HCT116 (cell line): ENCODE measurements at regions of chr1 and their contacts with region 1.

Region 1: GRCh38 chr1:24391882-24392603 is 21.5 kb downstream of the STPG1 start:
- DNase-seq: no peak
- ATAC-seq: peak; percentile 82
- H3K4me3 ChIP-seq: no peak overlapping the region
- H3K27ac ChIP-seq: no peak overlapping the region
- H3K4me1 ChIP-seq: peaks cover 8 to 35% of the 10 kb centered on the region in 2 experiments
- H3K27me3 ChIP-seq: no peaks in the 10 kb centered on the region
- CTCF ChIP-seq: peak; percentile 81 to 91 (median 90)
- POLR2A ChIP-seq: no peak
- RAD21 ChIP-seq: peak; percentile 91

Region 2: GRCh38 chr1:24070821-24071393 is 321.1 kb before region 1 on chr1:
- CTCF ChIA-PET with region 1: interaction called, 12 read pairs
- POLR2A ChIA-PET with region 1: no interaction called
- RAD21 ChIA-PET with region 1: no interaction called
- intact Hi-C with region 1: loop called (anchors 2 kb)
- DNase-seq: peak; percentile 77
- ATAC-seq: peak; percentile 95
- H3K4me3 ChIP-seq: no peak overlapping the region
- H3K27ac ChIP-seq: no peak overlapping the region
- H3K4me1 ChIP-seq: peaks cover 0 to 18% of the 10 kb centered on the region in 2 experiments; a peak in 2 of 4 replicates
- H3K27me3 ChIP-seq: no peaks in the 10 kb centered on the region
- CTCF ChIP-seq: peak; percentile 84 to 94 (median 88)
- POLR2A ChIP-seq: no peak
- RAD21 ChIP-seq: peak; percentile 96

Region 3: GRCh38 chr1:24201941-24202440 is 190.1 kb before region 1 on chr1:
- CTCF ChIA-PET with region 1: interaction called, 457 read pairs
- POLR2A ChIA-PET with region 1: interaction called, 19 read pairs
- RAD21 ChIA-PET with region 1: interaction called, 36 to 68 read pairs
- intact Hi-C with region 1: loop called (anchors 1 kb)
- DNase-seq: peak; percentile 86
- ATAC-seq: peak; percentile 73
- H3K4me3 ChIP-seq: no peak overlapping the region
- H3K27ac ChIP-seq: peak overlapping the region; percentile 31; the same call in 1 of the 2 replicates
- H3K4me1 ChIP-seq: peaks cover 15 to 36% of the 10 kb centered on the region in 2 experiments
- H3K27me3 ChIP-seq: no peaks in the 10 kb centered on the region
- CTCF ChIP-seq: peak; percentile 69 to 97 (median 88)
- POLR2A ChIP-seq: no peak
- RAD21 ChIP-seq: peak; percentile 99

Region 4: DNA sequence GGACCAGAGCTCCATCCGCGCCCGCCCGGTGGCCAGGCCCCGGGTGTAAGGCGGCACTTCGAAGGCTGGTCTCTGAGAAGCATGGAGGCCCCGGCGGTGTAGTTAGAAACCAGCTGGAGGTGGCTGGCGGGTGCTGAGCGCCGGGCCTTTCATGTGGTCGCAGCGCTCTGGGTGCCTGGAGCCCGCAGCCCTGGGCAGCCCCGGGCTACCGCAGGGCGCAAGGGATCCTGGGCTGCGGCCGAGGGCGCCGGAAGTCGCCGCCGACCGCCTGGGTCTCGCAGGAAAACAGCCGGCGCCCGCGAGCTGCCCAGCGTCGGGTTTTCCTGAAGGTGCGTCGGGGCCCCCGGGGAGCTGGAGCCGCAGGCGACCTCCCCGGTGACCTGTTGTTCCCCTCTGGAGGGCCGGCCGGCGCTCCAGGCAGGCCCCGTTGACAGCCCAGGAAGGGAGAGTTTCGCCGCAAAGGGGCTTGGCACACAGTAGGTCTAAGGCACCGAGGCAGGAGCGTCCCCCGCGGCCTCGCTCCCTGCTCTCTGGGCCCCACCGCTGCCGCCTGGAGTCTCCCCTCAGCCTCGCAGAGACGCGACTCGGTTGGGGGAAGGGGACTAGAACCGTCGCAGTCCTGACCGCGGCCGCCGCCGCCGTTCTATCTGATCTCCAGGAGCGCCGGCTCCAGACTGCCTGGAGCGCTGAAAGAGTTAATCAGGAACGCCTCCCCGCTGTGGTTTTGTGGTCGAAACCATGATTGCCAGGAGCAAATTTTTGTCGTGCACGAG is 70.2 kb before region 1 on chr1:
- CTCF ChIA-PET with region 1: interaction called, 4 read pairs
- POLR2A ChIA-PET with region 1: no interaction called
- RAD21 ChIA-PET with region 1: interaction called in 1 of 2 experiments, 3 read pairs
- intact Hi-C with region 1: loop called (anchors 5 kb)
- DNase-seq: peak; percentile 82
- ATAC-seq: peak; percentile 80
- H3K4me3 ChIP-seq: peak overlapping the region; percentile 49 to 63
- H3K27ac ChIP-seq: peak overlapping the region; percentile 61
- H3K4me1 ChIP-seq: peaks cover 44 to 92% of the 10 kb centered on the region in 2 experiments
- H3K27me3 ChIP-seq: peaks cover 73% of the 10 kb centered on the region
- CTCF ChIP-seq: no peak
- POLR2A ChIP-seq: no peak
- RAD21 ChIP-seq: peak; percentile 29

Region 5: GRCh38 chr1:24409535-24409934 is 17.5 kb after region 1 on chr1:
- CTCF ChIA-PET with region 1: interaction called, 20 read pairs
- POLR2A ChIA-PET with region 1: no interaction called
- RAD21 ChIA-PET with region 1: no interaction called
- intact Hi-C with region 1: no loop called
- DNase-seq: no peak
- ATAC-seq: no peak
- H3K4me3 ChIP-seq: no peak overlapping the region
- H3K27ac ChIP-seq: no peak overlapping the region
- H3K4me1 ChIP-seq: peaks cover 13 to 48% of the 10 kb centered on the region in 2 experiments
- H3K27me3 ChIP-seq: no peaks in the 10 kb centered on the region
- CTCF ChIP-seq: no peak
- POLR2A ChIP-seq: no peak
- RAD21 ChIP-seq: no peak

Region 6: DNA sequence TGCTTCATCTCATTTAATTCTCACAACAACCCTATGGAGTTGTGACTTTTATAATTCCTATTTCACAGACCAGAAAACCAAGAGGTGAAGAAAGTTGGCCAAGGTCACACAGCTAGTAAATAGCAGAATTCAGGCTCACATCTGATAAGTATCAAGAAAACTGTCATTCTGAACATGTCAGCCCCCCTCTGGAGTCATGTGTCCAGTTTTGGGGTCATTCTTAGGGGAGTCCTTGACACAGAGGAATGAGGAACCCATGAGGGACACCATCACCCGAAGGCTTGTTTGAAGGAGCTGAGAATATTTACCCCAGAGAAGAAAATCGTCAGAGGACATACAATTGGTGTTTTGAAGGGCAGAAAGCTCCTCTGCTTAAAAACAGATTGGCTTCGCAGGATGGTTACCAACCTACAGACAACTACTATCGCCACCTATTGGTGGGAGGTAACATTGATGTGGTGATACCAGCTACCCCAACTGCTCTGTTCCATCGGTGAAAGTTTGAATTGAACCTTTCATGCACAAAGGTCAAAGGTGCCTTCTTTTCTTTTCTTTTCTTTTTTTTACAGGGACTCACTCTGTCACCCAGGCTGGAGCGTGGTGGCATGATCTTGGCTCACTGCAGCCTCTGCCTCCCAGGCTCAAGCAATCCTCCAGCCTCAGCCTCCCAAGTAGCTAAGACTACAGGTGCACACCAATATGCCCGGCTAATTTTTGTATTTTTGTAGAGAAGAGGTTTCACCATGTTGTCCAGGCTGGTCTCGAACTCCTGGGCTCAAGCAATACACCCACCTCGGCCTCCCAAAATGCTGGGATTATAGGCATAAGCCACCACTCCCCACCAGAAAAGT is 195.2 kb after region 1 on chr1:
- CTCF ChIA-PET with region 1: interaction called, 17 read pairs
- POLR2A ChIA-PET with region 1: no interaction called
- RAD21 ChIA-PET with region 1: no interaction called
- intact Hi-C with region 1: loop called (anchors 10 kb)
- DNase-seq: peak; percentile 37
- ATAC-seq: peak; percentile 96
- H3K4me3 ChIP-seq: no peak overlapping the region
- H3K27ac ChIP-seq: no peak overlapping the region
- H3K4me1 ChIP-seq: peaks cover 3 to 4% of the 10 kb centered on the region in 2 experiments; a peak in 2 of 4 replicates
- H3K27me3 ChIP-seq: peaks cover 8% of the 10 kb centered on the region; the same call in 1 of the 2 replicates
- CTCF ChIP-seq: peak; percentile 59 to 82 (median 80); a peak in 5 of 6 replicates
- POLR2A ChIP-seq: no peak
- RAD21 ChIP-seq: peak; percentile 71